ENCODE measurements at regions of chr6 and their contacts with region 1.

Region 1: DNA sequence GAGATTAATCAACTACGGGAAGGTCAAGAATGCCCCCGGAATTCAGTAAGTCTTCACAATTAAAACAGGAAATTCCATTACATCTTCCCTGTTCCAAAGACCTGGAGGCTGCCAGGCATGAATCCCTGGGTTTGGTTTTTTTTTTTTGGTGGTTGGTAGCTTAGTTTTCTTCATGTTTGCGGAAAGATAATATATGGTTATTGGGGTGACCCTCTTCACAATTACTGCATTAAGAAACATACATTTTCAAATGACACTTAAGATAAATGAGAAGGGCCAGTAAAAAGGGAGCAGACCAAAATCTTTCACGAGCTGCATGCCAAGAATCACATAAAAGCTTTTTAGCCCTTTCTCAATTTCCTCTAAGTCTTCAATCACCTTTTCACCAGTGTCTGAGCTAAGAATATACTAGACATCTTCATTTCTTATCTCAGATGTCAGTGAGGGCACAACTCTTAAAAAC is 64.0 kb downstream of the KIF13A start:
- DNase-seq: no peak
- H3K4me3 ChIP-seq: no peak overlapping the region
- H3K27ac ChIP-seq: peak overlapping the region; percentile 52 to 78
- H3K4me1 ChIP-seq: peaks cover 0 to 10% of the 10 kb centered on the region in 2 donors
- H3K27me3 ChIP-seq: no peaks in the 10 kb centered on the region
- CTCF ChIP-seq: no peak
- POLR2A ChIP-seq: no peak

Region 2: GRCh38 chr6:17200395-17200794 is 723.0 kb before region 1 on chr6:
- intact Hi-C with region 1: loop called (anchors 5 kb)
- DNase-seq: no peak
- H3K4me3 ChIP-seq: no peak overlapping the region
- H3K27ac ChIP-seq: no peak overlapping the region
- H3K4me1 ChIP-seq: no peaks in the 10 kb centered on the region
- H3K27me3 ChIP-seq: peaks cover 0 to 5% of the 10 kb centered on the region in 2 donors
- CTCF ChIP-seq: no peak
- POLR2A ChIP-seq: no peak

Measured in breast epithelium (tissue), 4 donors.